Body of pancreas (tissue), 4 donors: ENCODE measurements at regions of chr20 and their contacts with region 1.

Region 1: GRCh38 chr20:63739130-63740069 is at the start of gene SLC2A4RG:
- DNase-seq: peak; percentile 78 to 87 (median 82)
- ATAC-seq: peak; percentile 77
- H3K4me3 ChIP-seq: peak within 1 kb of the TSS; percentile 14 to 27
- H3K27ac ChIP-seq: peak within 1 kb of the TSS; percentile 85 to 96 (median 89)
- H3K4me1 ChIP-seq: peaks cover 43% of the 10 kb centered on the region
- H3K27me3 ChIP-seq: no peaks in the 10 kb centered on the region
- CTCF ChIP-seq: no peak
- POLR2A ChIP-seq: peak in 2 of 3 donors; percentile 14 to 15
- total RNA-seq, gene SLC2A4RG: 30.9 to 69.5 TPM

Region 2: DNA sequence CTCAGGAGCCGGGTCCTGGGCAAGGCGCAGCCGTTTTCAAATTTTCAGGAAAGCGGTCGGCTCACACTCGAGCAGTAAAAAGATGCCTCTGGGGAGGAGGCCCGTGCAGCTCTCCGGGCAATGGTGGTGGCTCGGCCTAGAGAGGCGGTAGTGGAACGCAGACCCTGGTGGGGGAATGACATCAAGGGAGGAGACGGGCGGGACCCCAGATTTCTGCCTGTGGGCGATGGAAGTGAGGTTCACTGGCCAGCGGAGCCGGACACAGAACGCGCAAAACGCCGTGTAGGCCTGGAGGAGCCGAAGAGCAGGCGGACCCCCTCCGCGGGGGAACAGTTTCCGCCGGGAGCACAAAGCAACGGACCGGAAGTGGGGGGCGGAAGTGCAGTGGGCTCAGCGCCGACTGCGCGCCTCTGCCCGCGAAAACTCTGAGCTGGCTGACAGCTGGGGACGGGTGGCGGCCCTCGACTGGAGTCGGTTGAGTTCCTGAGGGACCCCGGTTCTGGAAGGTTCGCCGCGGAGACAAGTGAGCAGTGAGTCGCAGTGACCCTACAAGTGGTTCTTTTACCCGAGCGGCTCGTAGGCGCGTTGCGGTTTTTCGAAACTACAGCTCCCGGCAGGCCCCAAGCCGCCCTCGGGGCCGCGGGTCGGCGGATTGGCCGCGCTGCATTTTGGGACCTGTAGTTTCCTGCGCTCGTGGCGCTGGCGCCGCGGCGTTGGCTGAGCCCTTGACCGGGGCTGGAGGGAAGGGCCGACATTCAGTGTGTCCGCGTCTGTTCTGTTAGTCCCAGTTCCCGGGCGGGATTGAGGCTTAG is 81.3 kb before region 1 on chr20 and contains the start of gene RTEL1:
- intact Hi-C with region 1: loop called (anchors 10 kb)
- DNase-seq: peak; percentile 87 to 91 (median 90)
- ATAC-seq: peak; percentile 93
- H3K4me3 ChIP-seq: peak within 1 kb of the TSS; percentile 39 to 70
- H3K27ac ChIP-seq: peak within 1 kb of the TSS; percentile 65 to 86 (median 75)
- H3K4me1 ChIP-seq: peaks cover 31% of the 10 kb centered on the region
- H3K27me3 ChIP-seq: no peaks in the 10 kb centered on the region
- CTCF ChIP-seq: peak in 3 of 7 experiments; percentile 27 to 40 (median 35)
- POLR2A ChIP-seq: peak in 2 of 3 donors; percentile 56 to 57
- total RNA-seq, gene RTEL1: 7.3 to 50.4 TPM

Region 3: DNA sequence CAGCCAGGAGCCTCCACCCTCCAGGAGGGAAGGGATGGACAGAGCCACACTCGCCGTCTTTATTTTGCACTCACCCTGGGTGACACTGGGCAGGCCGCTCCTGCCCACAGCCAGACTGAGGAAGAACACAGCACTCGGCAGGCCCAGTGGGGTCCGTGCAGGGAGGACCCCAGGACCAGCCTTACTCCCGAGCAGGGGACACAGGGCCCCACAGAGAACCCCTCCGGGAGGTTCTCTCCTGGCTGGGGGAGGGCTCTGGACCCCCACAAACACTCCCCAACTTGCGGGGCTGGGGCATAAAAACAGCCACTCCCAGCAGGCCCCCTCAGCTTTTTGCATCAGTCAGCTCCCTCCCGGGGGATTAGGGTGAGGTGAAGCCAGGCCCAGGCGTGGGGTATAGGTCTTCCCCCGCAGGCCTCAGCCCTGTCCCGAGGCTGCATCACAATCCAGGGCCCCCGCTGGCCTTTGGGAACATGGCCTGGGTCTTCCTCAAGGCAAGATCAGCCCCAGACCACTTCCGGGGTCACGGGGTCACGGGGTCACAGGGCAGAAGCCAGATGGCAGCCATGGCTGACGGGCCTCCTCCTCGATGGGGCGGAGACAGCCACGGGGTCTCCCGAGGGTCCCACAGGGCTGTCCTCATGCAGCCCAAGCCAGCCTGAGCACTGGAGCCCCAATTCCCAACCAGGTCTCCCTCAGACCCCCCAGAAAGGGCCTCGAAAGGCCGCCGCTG is 39.8 kb before region 1 on chr20:
- intact Hi-C with region 1: loop called (anchors 5 kb)
- DNase-seq: peak in 1 of 4 donors; percentile 12
- ATAC-seq: no peak
- H3K4me3 ChIP-seq: no peak overlapping the region
- H3K27ac ChIP-seq: peak overlapping the region in 2 of 4 donors; percentile 54 to 57
- H3K4me1 ChIP-seq: peaks cover 37% of the 10 kb centered on the region
- H3K27me3 ChIP-seq: no peaks in the 10 kb centered on the region
- CTCF ChIP-seq: no peak
- POLR2A ChIP-seq: no peak